ENCODE measurements at regions of chr2 and their contacts with region 1.

Region 1: GRCh38 chr2:201406077-201406662 is 45.1 kb downstream of the TRAK2 start:
- DNase-seq: peak in 1 of 2 experiments; percentile 53
- H3K4me3 ChIP-seq: no peak overlapping the region
- H3K27ac ChIP-seq: peak overlapping the region; percentile 42
- H3K4me1 ChIP-seq: peaks cover 29% of the 10 kb centered on the region
- H3K27me3 ChIP-seq: no peaks in the 10 kb centered on the region
- CTCF ChIP-seq: no peak

Region 2: GRCh38 chr2:201513271-201513670 is 107.1 kb after region 1 on chr2:
- CTCF ChIA-PET with region 1: interaction called, 19 read pairs
- POLR2A ChIA-PET with region 1: no interaction called
- intact Hi-C with region 1: no loop called
- DNase-seq: no peak
- H3K4me3 ChIP-seq: no peak overlapping the region
- H3K27ac ChIP-seq: no peak overlapping the region
- H3K4me1 ChIP-seq: no peaks in the 10 kb centered on the region
- H3K27me3 ChIP-seq: no peaks in the 10 kb centered on the region
- CTCF ChIP-seq: no peak